Activated CD4-positive, alpha-beta memory T cell treated with anti-CD3 and anti-CD28 coated beads for 36 hours (primary cell): ENCODE measurements at regions of chr12 and their contacts with region 1.

Region 1: DNA sequence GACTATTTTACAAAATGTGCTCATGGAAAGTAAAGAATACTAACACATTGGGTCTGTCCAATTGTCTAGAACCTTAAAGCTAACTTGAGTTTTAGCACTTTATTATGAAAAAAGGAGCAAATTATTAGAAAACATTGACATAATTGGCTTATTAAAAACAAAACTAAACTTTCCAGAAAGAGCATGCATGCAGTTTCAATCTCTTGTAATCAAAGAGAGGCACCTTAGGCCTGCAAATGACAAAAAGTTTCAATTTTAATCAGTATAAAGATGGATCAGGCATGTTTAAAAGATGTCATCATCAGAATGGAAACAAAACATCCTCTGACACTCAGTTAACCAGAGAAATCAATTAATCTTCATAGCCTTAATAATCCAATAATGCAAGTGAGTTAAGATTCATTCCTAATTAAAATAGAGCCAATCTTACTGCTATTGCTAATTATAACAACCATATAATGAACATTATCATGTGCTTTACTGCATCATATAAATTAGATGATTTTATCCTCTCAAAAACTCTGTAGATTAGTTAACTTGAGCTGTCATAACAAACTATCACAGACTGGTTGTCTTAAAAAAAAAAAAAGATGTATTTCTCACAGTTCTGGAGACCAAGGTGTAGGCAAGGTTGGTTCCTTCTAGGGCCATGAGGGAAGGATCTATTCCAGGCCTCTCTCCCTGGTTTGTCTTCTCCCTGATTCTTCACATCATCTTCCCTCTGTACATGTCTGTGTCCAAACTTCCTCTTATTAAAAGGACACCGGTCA is 131.4 kb downstream of the RPAP3 start:
- DNase-seq: no peak
- H3K4me3 Mint-ChIP-seq: no peak overlapping the region
- H3K27ac Mint-ChIP-seq: no peak overlapping the region
- H3K4me1 Mint-ChIP-seq: peaks cover 28% of the 10 kb centered on the region
- H3K27me3 Mint-ChIP-seq: peaks cover 12% of the 10 kb centered on the region

Region 2: DNA sequence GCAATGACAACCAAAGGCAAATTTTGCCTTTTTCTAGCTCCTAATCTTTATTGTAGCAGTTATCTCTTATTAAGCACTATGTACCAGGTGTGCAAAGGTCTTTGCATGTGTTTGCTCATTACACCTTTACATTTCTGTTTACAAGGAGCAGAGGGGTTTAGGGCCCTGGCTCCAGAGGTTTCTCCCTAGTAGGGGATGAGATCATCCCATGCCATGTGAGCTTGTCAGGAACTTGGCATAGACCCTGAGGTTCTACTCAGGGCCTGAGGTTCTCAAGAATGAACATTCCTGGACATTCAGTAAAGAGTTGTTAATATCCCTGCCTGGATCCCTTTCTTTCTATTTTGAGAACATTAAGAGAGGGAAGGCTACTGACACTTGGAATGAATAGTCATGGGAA is 160.6 kb before region 1 on chr12:
- CTCF ChIA-PET with region 1: no interaction called
- POLR2A ChIA-PET with region 1: no interaction called
- intact Hi-C with region 1: loop called (anchors 5 kb)
- DNase-seq: no peak
- H3K4me3 Mint-ChIP-seq: no peak overlapping the region
- H3K27ac Mint-ChIP-seq: peak overlapping the region; percentile 18
- H3K4me1 Mint-ChIP-seq: peaks cover 70% of the 10 kb centered on the region
- H3K27me3 Mint-ChIP-seq: no peaks in the 10 kb centered on the region

Region 3: DNA sequence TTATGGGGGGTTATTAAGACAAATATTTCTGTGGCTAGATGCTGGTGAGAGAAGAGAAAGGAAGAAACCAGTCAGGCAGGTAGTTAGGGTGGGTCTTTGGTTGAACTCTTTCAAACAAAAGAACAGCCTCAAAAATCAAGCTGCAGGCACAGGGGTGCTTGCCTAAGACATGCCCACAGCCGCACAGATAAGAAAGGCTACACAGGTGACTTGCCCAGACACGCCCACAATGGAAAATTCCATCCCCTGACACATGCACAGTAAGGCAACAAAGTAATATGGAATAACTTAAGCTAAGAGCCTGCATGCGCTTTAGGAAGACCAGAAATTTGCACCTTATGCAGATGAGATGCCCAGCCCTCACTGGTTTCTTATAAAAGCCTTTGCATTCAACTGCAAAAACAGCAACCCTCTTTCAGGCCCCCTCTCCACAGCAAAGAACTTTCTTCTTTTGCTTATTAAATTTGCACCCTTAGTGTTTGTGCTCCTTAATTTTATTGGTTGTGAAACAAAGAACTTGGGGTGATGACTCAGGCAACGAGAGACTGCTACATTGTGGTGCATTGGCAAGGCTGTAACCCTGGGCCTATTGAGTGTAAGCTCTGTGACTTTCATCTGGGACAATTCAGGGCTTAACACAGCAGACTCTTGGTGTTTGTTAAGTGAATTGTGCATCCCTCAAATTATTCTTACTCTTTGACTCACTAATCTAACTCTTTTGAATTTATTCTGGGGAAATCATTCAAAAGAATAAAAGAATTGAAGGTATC is 18.0 kb before region 1 on chr12:
- CTCF ChIA-PET with region 1: no interaction called
- POLR2A ChIA-PET with region 1: no interaction called
- intact Hi-C with region 1: no loop called
- DNase-seq: no peak
- H3K4me3 Mint-ChIP-seq: no peak overlapping the region
- H3K27ac Mint-ChIP-seq: no peak overlapping the region
- H3K4me1 Mint-ChIP-seq: peaks cover 3% of the 10 kb centered on the region
- H3K27me3 Mint-ChIP-seq: no peaks in the 10 kb centered on the region